ENCODE measurements at regions of chr3 and their contacts with region 1.

Region 1: GRCh38 chr3:196251918-196252317 is 35.6 kb downstream of the SLC51A start:
- DNase-seq: no peak
- H3K4me3 ChIP-seq: no peak overlapping the region
- H3K27ac ChIP-seq: no peak overlapping the region
- H3K4me1 ChIP-seq: no peaks in the 10 kb centered on the region
- H3K27me3 ChIP-seq: no peaks in the 10 kb centered on the region
- CTCF ChIP-seq: no peak
- POLR2A ChIP-seq: no peak

Region 2: DNA sequence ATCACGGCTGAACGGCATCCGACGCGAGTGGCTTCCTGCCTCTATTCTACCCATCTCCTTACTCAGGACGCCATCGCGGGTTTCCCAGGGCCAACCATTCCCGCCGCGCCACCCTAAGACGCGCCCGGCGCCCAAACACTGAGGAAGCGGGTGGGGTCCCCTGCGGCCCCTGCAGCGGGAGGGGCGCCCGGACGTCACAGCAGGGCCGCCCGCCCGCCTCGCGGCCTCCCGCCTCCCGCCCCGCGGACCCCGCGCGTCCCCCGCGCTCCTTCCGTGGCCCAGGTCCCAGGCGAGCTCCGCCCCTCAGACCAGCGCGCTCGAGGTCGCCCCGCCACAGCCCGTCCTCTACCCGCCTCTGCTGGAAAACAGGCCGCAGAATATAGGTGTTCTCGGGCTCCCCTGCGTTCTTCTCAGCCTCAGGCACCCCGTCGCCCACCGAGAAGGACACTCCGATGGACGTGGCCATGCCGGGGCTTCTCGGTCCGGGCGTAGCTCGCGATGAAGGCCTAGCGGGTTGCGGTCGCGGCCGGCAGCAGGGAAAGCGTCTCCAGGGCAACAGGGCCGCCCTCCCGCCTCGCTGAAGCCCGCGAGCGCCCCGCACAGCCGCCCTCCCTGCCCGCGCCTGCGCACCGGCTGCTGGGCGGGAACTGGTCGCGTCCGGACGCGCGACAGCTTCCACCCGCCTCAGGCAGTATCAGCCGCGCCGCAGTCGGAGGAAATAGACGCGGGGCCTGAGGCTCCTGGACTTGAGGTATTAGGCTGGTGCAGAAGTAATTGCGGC is 66.0 kb after region 1 on chr3 and contains the start of gene DYNLT2B:
- intact Hi-C with region 1: loop called (anchors 10 kb)
- DNase-seq: peak; percentile 88 to 89
- H3K4me3 ChIP-seq: peak within 1 kb of the TSS; percentile 75 to 93 (median 79)
- H3K27ac ChIP-seq: peak within 1 kb of the TSS; percentile 89 to 90 (median 90)
- H3K4me1 ChIP-seq: no peaks in the 10 kb centered on the region
- H3K27me3 ChIP-seq: no peaks in the 10 kb centered on the region
- CTCF ChIP-seq: peak in 1 of 6 experiments; percentile 18
- POLR2A ChIP-seq: peak in 1 of 2 donors; percentile 81
- total RNA-seq, gene DYNLT2B: 4.6 to 16.8 (median 13.2) TPM

Region 3: GRCh38 chr3:196528639-196529233 is 276.8 kb after region 1 on chr3:
- intact Hi-C with region 1: loop called (anchors 10 kb)
- DNase-seq: peak; percentile 26 to 52
- H3K4me3 ChIP-seq: peak overlapping the region in 1 of 3 donors; percentile 14
- H3K27ac ChIP-seq: no peak overlapping the region
- H3K4me1 ChIP-seq: no peaks in the 10 kb centered on the region
- H3K27me3 ChIP-seq: no peaks in the 10 kb centered on the region
- CTCF ChIP-seq: peak in 5 of 6 experiments; percentile 26 to 62 (median 45)
- POLR2A ChIP-seq: no peak